ENCODE measurements at regions of chr11 and their contacts with region 1.

Region 1: DNA sequence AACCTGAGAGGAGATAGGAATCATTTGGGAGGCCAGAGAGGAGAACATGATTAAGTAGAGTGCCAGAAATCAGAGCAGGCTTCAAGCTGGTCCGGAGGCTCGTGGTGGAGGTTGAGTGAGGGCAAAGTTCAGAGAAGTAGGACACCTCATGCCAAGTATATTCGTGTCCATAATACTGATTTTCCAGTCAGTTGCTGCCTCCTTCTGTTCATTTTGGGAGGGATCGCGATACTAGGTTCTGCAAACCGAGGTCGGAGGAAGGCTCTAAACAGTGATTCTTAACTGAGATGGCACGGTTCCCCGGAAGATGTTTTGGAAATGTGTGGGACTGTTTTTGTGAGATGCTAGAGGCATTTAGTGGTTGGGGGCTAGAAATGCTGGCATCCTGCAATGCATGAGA is 13.6 kb upstream of the CD3E start:
- DNase-seq: peak; percentile 66
- H3K4me3 Mint-ChIP-seq: no peak overlapping the region
- H3K27ac Mint-ChIP-seq: no peak overlapping the region
- H3K4me1 Mint-ChIP-seq: peaks cover 14% of the 10 kb centered on the region
- H3K27me3 Mint-ChIP-seq: no peaks in the 10 kb centered on the region

Region 2: GRCh38 chr11:118145285-118146227 is 145.4 kb before region 1 on chr11:
- CTCF ChIA-PET with region 1: interaction called, 21 read pairs
- DNase-seq: peak; percentile 93
- H3K4me3 Mint-ChIP-seq: peak overlapping the region; percentile 75
- H3K27ac Mint-ChIP-seq: no peak overlapping the region
- H3K4me1 Mint-ChIP-seq: peaks cover 4% of the 10 kb centered on the region
- H3K27me3 Mint-ChIP-seq: peaks cover 96% of the 10 kb centered on the region

Region 3: GRCh38 chr11:118216621-118217481 is 74.1 kb before region 1 on chr11:
- CTCF ChIA-PET with region 1: interaction called, 13 read pairs
- DNase-seq: peak; percentile 50
- H3K4me3 Mint-ChIP-seq: peak overlapping the region; percentile 68
- H3K27ac Mint-ChIP-seq: peak overlapping the region; percentile 94
- H3K4me1 Mint-ChIP-seq: peaks cover 99% of the 10 kb centered on the region
- H3K27me3 Mint-ChIP-seq: no peaks in the 10 kb centered on the region

Region 4: GRCh38 chr11:118277306-118277705 is 13.6 kb before region 1 on chr11:
- CTCF ChIA-PET with region 1: interaction called, 11 read pairs
- DNase-seq: peak; percentile 33
- H3K4me3 Mint-ChIP-seq: no peak overlapping the region
- H3K27ac Mint-ChIP-seq: no peak overlapping the region
- H3K4me1 Mint-ChIP-seq: peaks cover 56% of the 10 kb centered on the region
- H3K27me3 Mint-ChIP-seq: peaks cover under 1% of the 10 kb centered on the region

Measured in activated naive CD4-positive, alpha-beta T cell treated with anti-CD3 and anti-CD28 coated beads, Interleukin-2, amount 10 ng/mL, durations not matched to agents 7 days and 5 days (primary cell).